K562 (cell line): ENCODE measurements at regions of chr3 and their contacts with region 1.

Region 1: GRCh38 chr3:123036352-123037014 is 8.9 kb upstream of the SEMA5B start:
- DNase-seq: no peak
- ATAC-seq: no peak
- H3K4me3 ChIP-seq: no peak overlapping the region
- H3K27ac ChIP-seq: no peak overlapping the region
- H3K4me1 ChIP-seq: no peaks in the 10 kb centered on the region
- H3K27me3 ChIP-seq: peaks cover 1 to 26% of the 10 kb centered on the region in 2 experiments; a peak in 4 of 5 replicates
- CTCF ChIP-seq: peak in 2 of 3 experiments; percentile 23 to 42; a peak in 1 of 6 replicates
- EP300 ChIP-seq: no peak
- POLR2A ChIP-seq: no peak
- RAD21 ChIP-seq: peak in 1 of 2 experiments; percentile 46; a peak in 2 of 4 replicates

Region 2: GRCh38 chr3:123267821-123268220 is 231.3 kb after region 1 on chr3:
- CTCF ChIA-PET with region 1: no interaction called
- POLR2A ChIA-PET with region 1: no interaction called
- in situ Hi-C with region 1: no loop called
- intact Hi-C with region 1: loop called (anchors 10 kb)
- DNase-seq: peak in 2 of 4 experiments; percentile 27 to 50
- ATAC-seq: peak; percentile 64; the same call in 2 of the 3 replicates
- H3K4me3 ChIP-seq: no peak overlapping the region
- H3K27ac ChIP-seq: no peak overlapping the region
- H3K4me1 ChIP-seq: no peaks in the 10 kb centered on the region; a peak in 1 of 5 replicates
- H3K27me3 ChIP-seq: no peaks in the 10 kb centered on the region
- CTCF ChIP-seq: peak in 1 of 3 experiments; percentile 32; a peak in 1 of 6 replicates
- EP300 ChIP-seq: no peak
- POLR2A ChIP-seq: no peak
- RAD21 ChIP-seq: peak in 1 of 2 experiments; percentile 44; a peak in 2 of 4 replicates